HepG2 (cell line): ENCODE measurements at regions of chr17 and their contacts with region 1.

Region 1: GRCh38 chr17:41688699-41689496 is at the start of gene EIF1:
- DNase-seq: peak; percentile 100
- ATAC-seq: peak; percentile 82
- H3K4me3 ChIP-seq: peak within 1 kb of the TSS; percentile 88 to 99 (median 97)
- H3K27ac ChIP-seq: peak within 1 kb of the TSS; percentile 99
- H3K4me1 ChIP-seq: peaks cover 29% of the 10 kb centered on the region
- H3K27me3 ChIP-seq: no peaks in the 10 kb centered on the region; a peak in 2 of 5 replicates
- CTCF ChIP-seq: no peak; the same call in 1 of the 2 replicates
- EP300 ChIP-seq: peak; percentile 49 to 96
- POLR2A ChIP-seq: peak; percentile 95 to 98
- RAD21 ChIP-seq: peak; percentile 39; the same call in 1 of the 2 replicates
- total RNA-seq, gene EIF1: 147 and 199 TPM in 2 replicates

Region 2: GRCh38 chr17:40647624-40648383 is 1041.1 kb before region 1 on chr17 and contains the start of gene SMARCE1:
- CTCF ChIA-PET with region 1: no interaction called
- POLR2A ChIA-PET with region 1: interaction called, 16 read pairs
- in situ Hi-C with region 1: no loop called
- intact Hi-C with region 1: no loop called
- DNase-seq: peak; percentile 66
- ATAC-seq: peak; percentile 91
- H3K4me3 ChIP-seq: peak within 1 kb of the TSS; percentile 97
- H3K27ac ChIP-seq: peak within 1 kb of the TSS; percentile 96
- H3K4me1 ChIP-seq: peaks cover 41% of the 10 kb centered on the region
- H3K27me3 ChIP-seq: peaks cover 0 to 4% of the 10 kb centered on the region in 2 experiments; a peak in 1 of 5 replicates
- CTCF ChIP-seq: no peak
- EP300 ChIP-seq: peak in 1 of 2 experiments; percentile 49; a peak in 1 of 4 replicates
- POLR2A ChIP-seq: peak in 1 of 2 experiments; percentile 58; a peak in 3 of 4 replicates
- RAD21 ChIP-seq: no peak
- total RNA-seq, gene SMARCE1: 127 and 168 TPM in 2 replicates

Region 3: DNA sequence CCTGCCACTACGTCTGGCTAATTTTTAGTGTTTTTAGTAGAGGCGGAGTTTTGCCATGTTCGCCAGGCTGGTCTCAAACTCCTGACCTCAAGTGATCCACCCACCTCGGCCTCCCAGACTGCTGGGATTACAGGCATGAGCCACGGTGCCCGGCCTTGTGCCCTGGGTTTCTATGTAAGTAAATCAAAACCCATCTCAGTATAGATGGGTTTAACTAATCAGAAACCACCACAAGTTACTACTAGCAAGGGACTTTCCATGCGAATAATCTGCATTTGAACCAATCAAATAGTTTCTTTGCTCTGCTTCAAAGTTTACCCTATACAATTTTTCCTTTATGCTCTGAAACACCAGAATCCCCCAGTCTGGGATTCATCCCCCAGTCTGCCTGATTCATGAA is 16.7 kb before region 1 on chr17:
- CTCF ChIA-PET with region 1: interaction called, 3 read pairs
- POLR2A ChIA-PET with region 1: interaction called, 443 read pairs
- in situ Hi-C with region 1: no loop called
- intact Hi-C with region 1: no loop called
- DNase-seq: no peak
- ATAC-seq: no peak
- H3K4me3 ChIP-seq: no peak overlapping the region
- H3K27ac ChIP-seq: no peak overlapping the region
- H3K4me1 ChIP-seq: peaks cover 45% of the 10 kb centered on the region
- H3K27me3 ChIP-seq: peaks cover 0 to 5% of the 10 kb centered on the region in 2 experiments; a peak in 2 of 5 replicates
- CTCF ChIP-seq: no peak
- EP300 ChIP-seq: no peak
- POLR2A ChIP-seq: no peak
- RAD21 ChIP-seq: no peak

Region 4: DNA sequence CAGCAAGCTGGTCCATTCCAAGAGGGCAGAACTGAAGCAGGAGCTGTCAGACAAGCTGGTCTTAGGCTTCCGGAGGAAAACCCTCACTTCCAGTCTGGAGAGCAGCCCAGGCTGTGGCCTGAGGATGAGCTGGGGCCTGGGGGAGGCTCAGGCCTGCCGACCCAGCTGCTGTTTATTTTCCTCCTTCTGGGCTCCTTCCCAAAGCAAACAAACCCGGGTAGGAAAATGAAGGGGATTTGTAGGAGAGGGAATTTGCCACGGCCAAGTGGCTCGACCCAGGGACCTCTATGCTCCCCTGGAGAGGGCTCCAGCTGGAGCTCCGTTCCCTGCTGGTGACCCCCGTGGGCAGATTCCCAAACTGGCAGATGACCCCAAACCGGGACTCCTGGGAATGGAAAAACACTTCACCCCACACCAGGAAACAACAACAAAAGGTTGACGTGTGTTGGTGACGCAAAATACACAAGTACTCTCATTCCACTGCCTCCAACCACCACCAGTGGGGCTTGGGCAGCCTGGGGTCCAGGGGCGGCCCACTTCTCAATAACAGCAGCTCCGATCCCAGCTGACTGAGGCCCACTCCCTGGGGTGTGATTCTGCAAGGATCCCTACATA is 88.8 kb after region 1 on chr17:
- CTCF ChIA-PET with region 1: no interaction called
- POLR2A ChIA-PET with region 1: interaction called, 21 read pairs
- in situ Hi-C with region 1: no loop called
- intact Hi-C with region 1: no loop called
- DNase-seq: peak; percentile 77
- ATAC-seq: peak; percentile 61
- H3K4me3 ChIP-seq: peak overlapping the region; percentile 24 to 60 (median 42)
- H3K27ac ChIP-seq: peak overlapping the region; percentile 75
- H3K4me1 ChIP-seq: peaks cover 60% of the 10 kb centered on the region
- H3K27me3 ChIP-seq: no peaks in the 10 kb centered on the region
- CTCF ChIP-seq: no peak
- EP300 ChIP-seq: peak in 1 of 2 experiments; percentile 55; a peak in 1 of 4 replicates
- POLR2A ChIP-seq: no peak
- RAD21 ChIP-seq: no peak

Region 5: DNA sequence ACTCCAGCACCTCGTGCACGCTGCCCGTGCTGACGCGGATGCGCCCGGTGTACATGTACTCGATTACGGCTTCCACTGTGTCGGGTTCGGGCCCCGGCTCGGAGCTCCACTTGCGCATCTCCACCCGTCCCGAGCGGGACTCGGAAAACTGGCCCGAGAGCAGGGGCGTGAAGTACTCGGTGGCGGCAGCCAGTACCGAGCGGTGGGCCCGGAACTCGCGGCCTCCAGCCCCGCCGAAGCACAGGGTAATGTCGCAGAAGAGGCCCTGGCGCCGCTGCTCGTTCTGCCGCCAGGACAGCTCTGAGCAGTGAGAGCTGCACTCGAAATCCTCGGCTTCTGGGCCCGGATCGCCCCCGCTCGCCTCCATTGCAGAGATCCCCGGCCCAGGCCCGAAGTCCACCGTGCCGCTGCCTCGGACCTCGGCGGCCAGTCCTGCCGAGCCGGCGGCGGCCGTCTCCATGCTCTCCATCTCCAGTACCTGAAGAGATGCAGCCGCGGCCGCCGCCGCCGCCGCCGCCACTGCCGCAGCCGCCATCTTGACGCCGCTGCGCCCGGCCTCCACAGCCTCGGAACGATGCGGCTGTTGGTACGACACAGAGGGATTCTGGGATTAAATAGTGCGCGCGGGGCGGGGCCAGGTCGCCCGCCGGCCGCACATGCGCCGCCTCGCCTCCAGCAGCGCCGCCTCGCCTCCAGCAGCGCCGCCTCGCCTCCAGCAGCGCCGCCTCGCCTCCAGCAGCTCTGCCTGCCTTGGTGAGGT is 176.1 kb after region 1 on chr17 and contains the start of gene KLHL11:
- CTCF ChIA-PET with region 1: no interaction called
- POLR2A ChIA-PET with region 1: interaction called, 14 read pairs
- in situ Hi-C with region 1: no loop called
- intact Hi-C with region 1: no loop called
- DNase-seq: peak; percentile 85
- ATAC-seq: peak; percentile 93
- H3K4me3 ChIP-seq: peak within 1 kb of the TSS; percentile 83 to 98 (median 91)
- H3K27ac ChIP-seq: peak within 1 kb of the TSS; percentile 79
- H3K4me1 ChIP-seq: peaks cover 56% of the 10 kb centered on the region
- H3K27me3 ChIP-seq: no peaks in the 10 kb centered on the region; a peak in 1 of 5 replicates
- CTCF ChIP-seq: no peak; the same call in 1 of the 2 replicates
- EP300 ChIP-seq: peak in 1 of 2 experiments; percentile 26; a peak in 1 of 4 replicates
- POLR2A ChIP-seq: peak; percentile 82 to 93
- RAD21 ChIP-seq: peak; percentile 50; the same call in 1 of the 2 replicates
- total RNA-seq, gene KLHL11: 27.5 and 37.1 TPM in 2 replicates

Region 6: GRCh38 chr17:42019509-42020404 is 330.9 kb after region 1 on chr17 and contains the start of gene NKIRAS2:
- CTCF ChIA-PET with region 1: no interaction called
- POLR2A ChIA-PET with region 1: interaction called, 11 read pairs
- in situ Hi-C with region 1: no loop called
- intact Hi-C with region 1: no loop called
- DNase-seq: peak; percentile 89
- ATAC-seq: peak; percentile 75
- H3K4me3 ChIP-seq: peak within 1 kb of the TSS; percentile 89 to 91 (median 89)
- H3K27ac ChIP-seq: peak within 1 kb of the TSS; percentile 64
- H3K4me1 ChIP-seq: peaks cover 62% of the 10 kb centered on the region
- H3K27me3 ChIP-seq: peaks cover 0 to 3% of the 10 kb centered on the region in 2 experiments; a peak in 1 of 5 replicates
- CTCF ChIP-seq: peak; percentile 99
- EP300 ChIP-seq: no peak; a peak in 1 of 4 replicates
- POLR2A ChIP-seq: peak; percentile 24 to 88; a peak in 3 of 4 replicates
- RAD21 ChIP-seq: peak; percentile 37; the same call in 1 of the 2 replicates
- total RNA-seq, gene NKIRAS2: 26.8 and 27.9 TPM in 2 replicates

Region 7: GRCh38 chr17:42163113-42163512 is 474.2 kb after region 1 on chr17:
- CTCF ChIA-PET with region 1: no interaction called
- POLR2A ChIA-PET with region 1: no interaction called
- in situ Hi-C with region 1: no loop called
- intact Hi-C with region 1: no loop called
- DNase-seq: peak; percentile 49
- ATAC-seq: peak; percentile 44
- H3K4me3 ChIP-seq: peak overlapping the region in 1 of 3 experiments; percentile 41; a peak in 1 of 6 replicates
- H3K27ac ChIP-seq: no peak overlapping the region
- H3K4me1 ChIP-seq: peaks cover 54% of the 10 kb centered on the region
- H3K27me3 ChIP-seq: peaks cover 2 to 5% of the 10 kb centered on the region in 2 experiments; a peak in 2 of 5 replicates
- CTCF ChIP-seq: peak; percentile 81
- EP300 ChIP-seq: no peak
- POLR2A ChIP-seq: no peak
- RAD21 ChIP-seq: peak; percentile 53; the same call in 1 of the 2 replicates